Posterior vena cava (tissue), 2 donors: ENCODE measurements at regions of chr3 and their contacts with region 1.

Region 1: GRCh38 chr3:126465928-126466544 is 9.7 kb downstream of the ZXDC start:
- DNase-seq: peak; percentile 80

Region 2: GRCh38 chr3:126212602-126213378 is 253.2 kb before region 1 on chr3:
- intact Hi-C with region 1: no loop called
- DNase-seq: peak; percentile 84

Region 3: DNA sequence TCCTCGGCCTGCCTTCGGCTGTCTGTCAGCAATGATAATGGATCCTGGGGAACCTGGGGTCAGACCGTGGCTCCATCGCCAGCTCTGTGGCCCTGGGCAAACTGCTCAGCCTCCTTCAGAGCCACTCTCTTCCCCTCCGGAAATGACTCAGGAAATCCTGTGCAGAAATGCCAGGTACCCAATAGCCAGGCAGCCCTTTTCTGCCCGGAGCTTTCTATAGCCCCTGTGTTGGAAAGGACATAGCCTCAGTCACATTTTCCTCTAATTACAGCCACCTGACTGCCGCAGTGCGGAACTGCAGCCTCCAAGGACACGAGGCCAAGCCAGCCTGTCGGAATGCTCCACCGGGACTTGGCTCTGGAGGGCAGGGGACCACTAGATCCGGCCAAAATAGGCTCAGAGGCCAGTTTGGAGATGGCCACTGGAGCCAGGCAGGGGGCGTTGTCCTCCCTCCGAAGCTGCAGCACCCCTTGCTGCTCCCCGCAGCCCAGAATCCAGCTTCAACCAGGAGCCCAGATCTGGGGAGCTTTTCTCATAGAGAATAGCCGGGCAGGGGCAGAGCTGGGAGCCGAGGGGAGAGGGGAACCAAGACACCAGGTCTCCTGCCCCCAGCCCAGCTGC is 21.2 kb after region 1 on chr3:
- intact Hi-C with region 1: loop called in 1 of 2 experiments (anchors 1 kb)
- DNase-seq: no peak

Region 4: DNA sequence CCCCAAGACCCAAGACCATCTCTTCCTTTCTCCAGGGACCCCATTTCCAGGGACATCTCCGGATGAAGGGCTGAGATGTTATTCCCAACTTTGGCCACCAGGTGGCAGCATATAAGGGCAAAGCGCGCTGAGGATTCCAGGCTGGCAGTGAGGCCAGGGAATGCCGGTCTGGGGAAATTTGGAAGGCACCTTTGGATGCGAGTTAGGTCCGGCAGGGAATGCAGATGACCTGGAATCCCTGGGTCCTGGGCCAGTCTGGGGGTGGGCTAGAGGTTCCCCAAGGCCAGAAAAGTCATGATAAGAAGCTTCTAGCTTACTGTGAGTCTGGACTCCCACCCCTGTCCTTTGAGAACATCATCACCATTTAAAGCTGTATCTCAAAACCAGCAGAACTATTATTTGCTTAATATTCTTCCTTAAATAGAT is 56.3 kb after region 1 on chr3:
- intact Hi-C with region 1: no loop called
- DNase-seq: peak; percentile 85